ENCODE measurements at regions of chr4 and their contacts with region 1.

Region 1: GRCh38 chr4:55853484-55854046 is at the start of gene EXOC1:
- DNase-seq: peak; percentile 99
- H3K4me3 Mint-ChIP-seq: peak within 1 kb of the TSS; percentile 32
- H3K27ac Mint-ChIP-seq: peak within 1 kb of the TSS; percentile 86
- H3K4me1 Mint-ChIP-seq: peaks cover 28% of the 10 kb centered on the region
- H3K27me3 Mint-ChIP-seq: no peaks in the 10 kb centered on the region
- total RNA-seq, gene EXOC1: 18.7 to 21.9 TPM

Region 2: GRCh38 chr4:55395529-55396307 is 457.8 kb before region 1 on chr4 and contains the start of gene TMEM165:
- CTCF ChIA-PET with region 1: no interaction called
- intact Hi-C with region 1: loop called (anchors 1 kb)
- DNase-seq: peak; percentile 92
- H3K4me3 Mint-ChIP-seq: peak within 1 kb of the TSS; percentile 96
- H3K27ac Mint-ChIP-seq: peak within 1 kb of the TSS; percentile 89
- H3K4me1 Mint-ChIP-seq: peaks cover 39% of the 10 kb centered on the region
- H3K27me3 Mint-ChIP-seq: no peaks in the 10 kb centered on the region
- total RNA-seq, gene TMEM165: 39.1 to 40.6 TPM

Region 3: DNA sequence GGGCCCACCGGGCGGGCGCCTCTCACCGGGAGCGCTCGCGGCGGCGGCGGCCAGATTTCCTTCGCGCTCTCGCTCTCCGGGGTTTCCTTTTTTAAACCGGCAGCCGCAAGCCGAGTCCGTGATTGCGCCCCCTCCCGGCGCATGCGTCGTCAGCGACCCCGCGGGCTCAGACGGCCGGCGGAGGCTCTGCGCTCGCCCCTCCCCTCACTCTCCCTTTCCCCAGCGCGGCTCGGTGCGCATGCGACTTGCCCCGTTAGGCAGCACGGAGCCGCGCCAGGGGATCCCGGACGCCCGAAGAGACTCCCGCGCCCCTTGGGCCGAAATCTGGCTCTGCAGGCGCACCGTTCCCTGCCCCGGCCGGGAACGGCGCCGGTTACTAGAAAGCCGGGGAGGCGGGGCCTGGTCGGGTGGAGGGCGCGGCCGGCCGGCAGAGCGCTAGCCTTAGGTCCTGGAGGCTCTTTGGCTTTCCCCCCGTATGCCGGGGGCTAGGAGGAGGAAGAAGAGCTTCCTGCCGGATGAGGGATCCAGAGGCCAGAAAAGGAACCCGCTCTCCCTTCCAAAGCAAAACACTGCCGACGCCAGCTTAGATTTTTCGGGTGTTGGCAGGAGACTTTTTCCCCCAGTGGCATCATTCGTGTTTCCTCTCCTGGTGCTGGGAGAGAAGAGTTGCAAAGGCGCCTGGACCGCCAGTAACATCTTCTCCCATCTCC is 306.7 kb before region 1 on chr4 and contains the start of gene CLOCK:
- CTCF ChIA-PET with region 1: interaction called, 3 read pairs
- intact Hi-C with region 1: loop called (anchors 2 kb)
- DNase-seq: peak; percentile 83
- H3K4me3 Mint-ChIP-seq: peak within 1 kb of the TSS; percentile 84
- H3K27ac Mint-ChIP-seq: peak within 1 kb of the TSS; percentile 89
- H3K4me1 Mint-ChIP-seq: peaks cover 50% of the 10 kb centered on the region
- H3K27me3 Mint-ChIP-seq: no peaks in the 10 kb centered on the region
- total RNA-seq, gene CLOCK: 8.1 to 8.5 TPM

Region 4: GRCh38 chr4:55906999-55907398 is 53.4 kb after region 1 on chr4:
- CTCF ChIA-PET with region 1: no interaction called
- intact Hi-C with region 1: loop called (anchors 1 kb)
- DNase-seq: peak; percentile 30
- H3K4me3 Mint-ChIP-seq: no peak overlapping the region
- H3K27ac Mint-ChIP-seq: peak overlapping the region; percentile 69
- H3K4me1 Mint-ChIP-seq: peaks cover 31% of the 10 kb centered on the region
- H3K27me3 Mint-ChIP-seq: no peaks in the 10 kb centered on the region

Region 5: DNA sequence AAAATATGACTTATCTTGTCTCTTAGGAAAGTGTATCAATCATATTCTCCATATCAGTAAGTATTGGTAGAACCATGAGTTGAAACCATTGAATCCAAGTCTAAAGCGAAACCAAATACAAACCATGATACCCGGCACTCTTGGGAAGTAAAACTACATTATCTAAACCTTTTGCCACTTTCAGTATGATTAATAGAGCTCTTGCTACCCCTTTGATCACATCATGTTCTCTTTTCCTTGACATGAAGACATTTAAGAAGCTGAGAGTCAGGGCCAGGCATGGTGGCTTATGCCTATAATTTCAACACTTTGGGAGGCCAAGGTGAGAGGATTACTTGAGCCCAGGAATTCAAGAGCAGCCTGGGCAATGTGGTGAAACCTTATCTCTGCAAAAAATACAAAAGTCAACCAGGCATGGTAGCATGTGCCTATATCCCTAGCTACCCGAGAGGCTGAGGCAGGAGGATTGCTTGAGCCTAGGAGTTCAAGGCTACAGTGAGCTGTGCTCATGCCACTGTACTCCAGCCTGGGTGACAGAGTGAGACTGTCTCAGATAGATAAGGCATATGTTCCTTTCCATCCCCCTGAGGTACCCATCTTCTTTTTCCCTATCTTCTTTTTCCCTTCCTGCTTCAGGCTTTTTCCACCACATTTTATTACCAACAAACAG is 140.6 kb after region 1 on chr4:
- CTCF ChIA-PET with region 1: no interaction called
- intact Hi-C with region 1: loop called (anchors 5 kb)
- DNase-seq: peak; percentile 36
- H3K4me3 Mint-ChIP-seq: no peak overlapping the region
- H3K27ac Mint-ChIP-seq: peak overlapping the region; percentile 41
- H3K4me1 Mint-ChIP-seq: peaks cover 33% of the 10 kb centered on the region
- H3K27me3 Mint-ChIP-seq: no peaks in the 10 kb centered on the region

Region 6: DNA sequence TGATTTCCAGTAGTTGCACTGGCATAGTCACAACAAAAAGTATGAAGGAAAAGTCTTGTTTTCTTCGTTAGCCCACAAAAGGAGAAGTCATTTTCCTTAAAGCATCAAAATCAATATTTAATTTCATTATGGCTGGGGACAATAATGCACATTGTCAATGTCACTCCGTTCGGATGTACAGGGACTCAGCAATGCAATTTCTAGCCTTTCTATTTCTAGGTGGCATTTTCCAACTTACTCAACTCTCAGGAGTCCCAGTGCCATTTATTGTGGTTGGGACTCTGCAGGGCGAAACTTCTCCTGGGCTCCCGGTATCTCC is 194.8 kb after region 1 on chr4:
- CTCF ChIA-PET with region 1: no interaction called
- intact Hi-C with region 1: no loop called
- DNase-seq: no peak
- H3K4me3 Mint-ChIP-seq: peak overlapping the region; percentile 70
- H3K27ac Mint-ChIP-seq: no peak overlapping the region
- H3K4me1 Mint-ChIP-seq: peaks cover 9% of the 10 kb centered on the region
- H3K27me3 Mint-ChIP-seq: peaks cover 46% of the 10 kb centered on the region

Region 7: DNA sequence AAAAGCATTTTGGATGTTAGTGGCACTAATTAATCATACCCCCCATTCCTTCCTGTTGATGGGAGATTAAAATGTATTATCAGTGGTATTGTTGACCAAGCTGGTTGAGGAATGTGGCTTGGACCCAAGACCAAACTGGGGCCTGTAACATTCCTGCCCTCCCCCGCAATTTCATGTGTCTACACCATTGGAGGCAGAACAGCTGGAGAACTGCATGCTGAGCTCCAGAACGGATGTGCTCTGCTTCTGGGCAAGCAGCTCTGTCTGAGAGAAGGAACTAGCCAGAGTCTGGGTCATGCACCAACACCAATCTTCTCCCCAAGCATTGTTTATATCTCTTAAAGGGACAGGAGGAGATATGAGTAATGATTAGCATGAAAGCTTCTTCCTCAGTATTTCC is 280.7 kb after region 1 on chr4:
- CTCF ChIA-PET with region 1: no interaction called
- intact Hi-C with region 1: no loop called
- DNase-seq: no peak
- H3K4me3 Mint-ChIP-seq: no peak overlapping the region
- H3K27ac Mint-ChIP-seq: no peak overlapping the region
- H3K4me1 Mint-ChIP-seq: no peaks in the 10 kb centered on the region
- H3K27me3 Mint-ChIP-seq: no peaks in the 10 kb centered on the region

Region 8: GRCh38 chr4:56387023-56388001 is 533.7 kb after region 1 on chr4 and contains the start of gene AASDH:
- CTCF ChIA-PET with region 1: no interaction called
- intact Hi-C with region 1: loop called (anchors 1 kb)
- DNase-seq: peak; percentile 97
- H3K4me3 Mint-ChIP-seq: peak within 1 kb of the TSS; percentile 87
- H3K27ac Mint-ChIP-seq: peak within 1 kb of the TSS; percentile 95
- H3K4me1 Mint-ChIP-seq: peaks cover 39% of the 10 kb centered on the region
- H3K27me3 Mint-ChIP-seq: no peaks in the 10 kb centered on the region
- total RNA-seq, gene AASDH: 13.5 to 17.0 TPM

Region 9: DNA sequence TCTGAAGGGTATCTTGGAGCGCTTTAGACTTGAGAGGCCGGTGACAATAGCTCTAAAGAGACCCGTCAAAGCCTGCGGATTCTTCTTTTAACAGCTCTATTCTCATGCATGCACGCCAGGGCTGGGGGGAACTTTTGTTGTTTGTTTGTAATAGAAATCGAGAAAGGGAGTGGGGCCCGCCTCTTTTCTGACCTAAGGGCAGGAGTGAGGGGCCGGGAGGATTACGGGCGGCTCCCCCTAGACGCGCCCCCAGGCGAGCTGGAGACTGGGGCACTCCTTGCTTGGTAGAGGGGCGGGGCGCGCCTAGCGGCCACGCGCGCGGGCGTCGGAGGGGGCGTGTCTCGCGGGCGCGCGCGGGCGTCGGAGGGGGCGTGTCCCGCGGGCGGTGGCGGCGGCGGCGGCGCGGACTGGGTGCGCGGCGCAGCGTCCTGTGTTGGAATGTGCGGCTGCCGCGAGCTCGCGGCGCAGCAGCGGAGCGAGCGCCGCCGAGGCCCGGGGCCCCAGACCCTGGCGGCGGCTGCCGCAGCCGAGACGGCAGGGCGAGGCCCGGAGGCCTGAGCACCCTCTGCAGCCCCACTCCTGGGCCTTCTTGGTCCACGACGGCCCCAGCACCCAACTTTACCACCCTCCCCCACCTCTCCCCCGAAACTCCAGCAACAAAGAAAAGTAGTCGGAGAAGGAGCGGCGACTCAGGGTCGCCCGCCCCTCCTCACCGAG is 1054.1 kb after region 1 on chr4 and contains the start of gene REST:
- CTCF ChIA-PET with region 1: no interaction called
- intact Hi-C with region 1: loop called (anchors 5 kb)
- DNase-seq: peak; percentile 64
- H3K4me3 Mint-ChIP-seq: peak within 1 kb of the TSS; percentile 81
- H3K27ac Mint-ChIP-seq: peak within 1 kb of the TSS; percentile 65
- H3K4me1 Mint-ChIP-seq: peaks cover 43% of the 10 kb centered on the region
- H3K27me3 Mint-ChIP-seq: no peaks in the 10 kb centered on the region
- total RNA-seq, gene REST: 35.6 to 36.8 TPM

Measured in activated naive CD4-positive, alpha-beta T cell treated with anti-CD3 and anti-CD28 coated beads for 36 hours (primary cell).